SK-MEL-5 (cell line): ENCODE measurements at regions of chr20 and their contacts with region 1.

Region 1: DNA sequence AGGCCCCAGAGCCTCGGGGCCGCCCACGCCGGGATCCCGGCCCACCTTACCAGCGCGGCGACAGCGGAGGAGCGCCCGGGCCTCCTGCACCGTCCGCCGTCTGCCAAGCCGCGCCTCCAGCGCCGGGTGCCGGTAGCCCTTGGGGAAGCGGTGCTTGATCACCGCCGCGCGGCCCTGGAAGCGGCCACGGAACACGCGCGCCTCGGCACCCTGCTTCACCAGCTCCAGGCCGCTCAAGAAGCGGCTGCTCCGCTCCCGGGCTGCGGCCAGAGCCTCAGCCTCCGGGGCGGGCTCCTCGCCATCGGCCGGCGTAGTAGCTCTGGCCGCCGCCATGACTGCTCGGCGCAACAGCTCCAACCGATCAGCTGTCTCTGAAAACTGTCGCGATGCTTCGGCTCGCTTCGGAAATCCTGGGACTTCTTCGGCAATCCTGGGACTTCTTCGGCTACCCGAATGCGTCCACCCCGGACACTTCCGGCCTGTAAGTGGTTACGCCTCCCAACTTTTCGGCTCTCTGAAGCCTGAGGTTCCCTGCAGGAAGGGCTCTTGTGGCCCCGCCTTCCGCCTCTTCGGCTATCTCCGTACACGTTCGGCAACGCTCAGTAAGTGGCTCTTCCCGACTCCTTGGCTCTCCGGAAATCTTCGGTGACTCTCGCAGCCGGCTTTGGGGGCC is at the start of gene TP53RK:
- DNase-seq: peak; percentile 100
- total RNA-seq, gene TP53RK: 52.9 and 56.6 TPM in 2 replicates

Region 2: GRCh38 chr20:46545077-46545826 is 144.0 kb before region 1 on chr20:
- in situ Hi-C with region 1: loop called (anchors 25 kb)
- DNase-seq: no peak